Activated CD4-positive, alpha-beta memory T cell treated with anti-CD3 and anti-CD28 coated beads for 36 hours (primary cell): ENCODE measurements at regions of chr6 and their contacts with region 1.

Region 1: DNA sequence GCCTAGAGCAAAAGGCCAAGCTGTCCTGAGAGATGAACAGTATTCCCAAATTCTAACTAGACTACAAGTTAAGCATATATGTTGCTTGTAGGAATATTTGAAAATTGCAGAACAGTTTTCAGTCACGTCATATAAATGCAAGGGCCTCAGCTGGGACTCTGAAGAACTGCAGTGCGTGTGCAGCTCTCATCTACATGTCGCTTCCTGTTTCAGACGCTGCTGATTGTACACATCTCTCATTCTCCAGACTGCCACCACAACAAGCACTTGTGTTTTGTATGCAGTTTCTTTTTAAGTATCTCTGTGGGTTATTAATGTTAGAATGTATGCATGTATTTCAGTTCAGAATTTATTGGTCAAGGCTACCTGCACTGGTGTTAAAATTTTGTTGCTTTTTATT is 119.7 kb downstream of the MAP3K4 start:
- DNase-seq: peak; percentile 36
- H3K4me3 Mint-ChIP-seq: no peak overlapping the region
- H3K27ac Mint-ChIP-seq: peak overlapping the region; percentile 83
- H3K4me1 Mint-ChIP-seq: peaks cover 38% of the 10 kb centered on the region
- H3K27me3 Mint-ChIP-seq: no peaks in the 10 kb centered on the region

Region 2: DNA sequence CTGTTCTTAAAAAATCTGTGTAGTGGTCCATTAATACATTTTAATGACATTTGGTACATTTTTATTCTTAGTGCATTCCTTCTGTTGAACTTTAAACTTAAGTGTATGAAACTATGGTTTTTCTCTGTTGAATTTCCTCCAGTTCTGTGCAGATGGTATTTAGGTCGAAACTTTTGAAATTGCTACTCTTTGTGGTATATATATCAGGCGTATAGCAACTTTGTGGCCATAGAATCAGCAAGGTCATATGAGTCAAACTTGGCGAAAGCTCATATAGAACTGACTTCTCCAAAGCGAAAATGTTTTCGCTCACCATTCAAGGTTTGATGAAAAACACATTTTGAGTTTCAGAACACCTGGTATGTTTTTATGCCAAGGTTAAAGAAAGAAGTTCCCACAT is 26.0 kb before region 1 on chr6:
- CTCF ChIA-PET with region 1: no interaction called
- POLR2A ChIA-PET with region 1: no interaction called
- intact Hi-C with region 1: loop called (anchors 2 kb)
- DNase-seq: no peak
- H3K4me3 Mint-ChIP-seq: no peak overlapping the region
- H3K27ac Mint-ChIP-seq: peak overlapping the region; percentile 52
- H3K4me1 Mint-ChIP-seq: peaks cover 15% of the 10 kb centered on the region
- H3K27me3 Mint-ChIP-seq: no peaks in the 10 kb centered on the region

Region 3: GRCh38 chr6:161143663-161144430 is 32.6 kb after region 1 on chr6:
- CTCF ChIA-PET with region 1: no interaction called
- POLR2A ChIA-PET with region 1: no interaction called
- intact Hi-C with region 1: no loop called
- DNase-seq: no peak
- H3K4me3 Mint-ChIP-seq: no peak overlapping the region
- H3K27ac Mint-ChIP-seq: no peak overlapping the region
- H3K4me1 Mint-ChIP-seq: no peaks in the 10 kb centered on the region
- H3K27me3 Mint-ChIP-seq: no peaks in the 10 kb centered on the region

Region 4: GRCh38 chr6:161235776-161236633 is 124.7 kb after region 1 on chr6:
- CTCF ChIA-PET with region 1: no interaction called
- POLR2A ChIA-PET with region 1: no interaction called
- intact Hi-C with region 1: loop called (anchors 1 kb)
- DNase-seq: peak; percentile 15
- H3K4me3 Mint-ChIP-seq: no peak overlapping the region
- H3K27ac Mint-ChIP-seq: peak overlapping the region; percentile 56
- H3K4me1 Mint-ChIP-seq: peaks cover 29% of the 10 kb centered on the region
- H3K27me3 Mint-ChIP-seq: no peaks in the 10 kb centered on the region